CD4-positive, alpha-beta memory T cell (primary cell): ENCODE measurements at regions of chr3 and their contacts with region 1.

Region 1: GRCh38 chr3:127652231-127652995 is 20.3 kb upstream of the ABTB1 start:
- DNase-seq: peak in 3 of 5 donors; percentile 17 to 37 (median 22)
- H3K4me3 ChIP-seq: no peak overlapping the region
- H3K4me3 Mint-ChIP-seq: no peak overlapping the region
- H3K27ac ChIP-seq: no peak overlapping the region
- H3K27ac Mint-ChIP-seq: no peak overlapping the region
- H3K4me1 ChIP-seq: no peaks in the 10 kb centered on the region
- H3K4me1 Mint-ChIP-seq: no peaks in the 10 kb centered on the region
- H3K27me3 ChIP-seq: no peaks in the 10 kb centered on the region
- H3K27me3 Mint-ChIP-seq: no peaks in the 10 kb centered on the region

Region 2: GRCh38 chr3:126498929-126499328 is 1153.5 kb before region 1 on chr3:
- CTCF ChIA-PET with region 1: no interaction called
- POLR2A ChIA-PET with region 1: no interaction called
- intact Hi-C with region 1: no loop called
- DNase-seq: no peak
- H3K4me3 ChIP-seq: no peak overlapping the region
- H3K4me3 Mint-ChIP-seq: no peak overlapping the region
- H3K27ac ChIP-seq: no peak overlapping the region
- H3K27ac Mint-ChIP-seq: no peak overlapping the region
- H3K4me1 ChIP-seq: no peaks in the 10 kb centered on the region
- H3K4me1 Mint-ChIP-seq: peaks cover 0 to 2% (median 0%) of the 10 kb centered on the region in 4 donors
- H3K27me3 ChIP-seq: no peaks in the 10 kb centered on the region
- H3K27me3 Mint-ChIP-seq: no peaks in the 10 kb centered on the region

Region 3: DNA sequence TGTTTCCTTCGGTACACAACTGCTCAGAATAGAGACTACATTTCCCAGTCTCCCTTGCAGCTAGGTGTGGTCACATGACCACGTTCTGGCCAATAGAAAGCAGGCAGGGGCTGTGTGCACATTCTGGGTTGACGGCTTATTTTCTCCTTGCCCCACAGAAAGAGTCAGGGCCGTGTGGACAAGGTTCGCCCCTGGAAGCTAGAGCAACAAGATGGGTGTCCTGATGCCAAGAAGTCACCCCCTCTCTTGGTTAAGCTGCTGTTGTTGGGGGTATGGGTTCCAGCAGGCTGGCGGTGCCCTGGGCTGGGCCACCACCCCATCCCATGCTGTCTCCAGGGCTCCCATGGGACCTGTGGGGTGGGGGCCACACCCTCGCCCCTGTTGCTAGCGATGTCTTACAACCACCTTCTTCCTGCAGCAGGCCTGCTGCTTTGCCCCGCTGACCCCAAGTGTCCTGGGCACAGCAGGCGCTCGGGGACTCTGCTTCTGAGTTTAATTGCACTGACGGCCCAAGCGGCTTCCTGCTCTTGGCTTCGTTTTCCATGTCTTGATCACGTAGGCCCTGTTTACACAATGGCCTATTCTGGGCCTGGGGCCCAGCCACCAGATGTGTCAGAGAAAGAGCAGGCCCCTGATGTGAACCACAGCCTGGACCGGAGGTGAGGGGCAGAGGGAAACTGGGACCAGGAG is 45.3 kb after region 1 on chr3:
- CTCF ChIA-PET with region 1: interaction called, 35 read pairs
- POLR2A ChIA-PET with region 1: no interaction called
- intact Hi-C with region 1: loop called (anchors 1 kb)
- DNase-seq: peak; percentile 35 to 54 (median 50)
- H3K4me3 ChIP-seq: no peak overlapping the region
- H3K4me3 Mint-ChIP-seq: peak overlapping the region in 3 of 8 donors; percentile 17 to 68 (median 65)
- H3K27ac ChIP-seq: no peak overlapping the region
- H3K27ac Mint-ChIP-seq: peak overlapping the region in 2 of 7 donors; percentile 4 to 20
- H3K4me1 ChIP-seq: no peaks in the 10 kb centered on the region
- H3K4me1 Mint-ChIP-seq: peaks cover 0 to 4% (median 2%) of the 10 kb centered on the region in 4 donors
- H3K27me3 ChIP-seq: no peaks in the 10 kb centered on the region
- H3K27me3 Mint-ChIP-seq: peaks cover 1 to 2% of the 10 kb centered on the region in 2 donors

Region 4: GRCh38 chr3:127848131-127849129 is 196.0 kb after region 1 on chr3:
- CTCF ChIA-PET with region 1: no interaction called
- POLR2A ChIA-PET with region 1: no interaction called
- intact Hi-C with region 1: no loop called
- DNase-seq: no peak
- H3K4me3 ChIP-seq: no peak overlapping the region
- H3K4me3 Mint-ChIP-seq: no peak overlapping the region
- H3K27ac ChIP-seq: no peak overlapping the region
- H3K27ac Mint-ChIP-seq: no peak overlapping the region
- H3K4me1 ChIP-seq: no peaks in the 10 kb centered on the region
- H3K4me1 Mint-ChIP-seq: no peaks in the 10 kb centered on the region
- H3K27me3 ChIP-seq: peaks cover 6% of the 10 kb centered on the region
- H3K27me3 Mint-ChIP-seq: peaks cover 7 to 8% of the 10 kb centered on the region in 2 donors

Region 5: DNA sequence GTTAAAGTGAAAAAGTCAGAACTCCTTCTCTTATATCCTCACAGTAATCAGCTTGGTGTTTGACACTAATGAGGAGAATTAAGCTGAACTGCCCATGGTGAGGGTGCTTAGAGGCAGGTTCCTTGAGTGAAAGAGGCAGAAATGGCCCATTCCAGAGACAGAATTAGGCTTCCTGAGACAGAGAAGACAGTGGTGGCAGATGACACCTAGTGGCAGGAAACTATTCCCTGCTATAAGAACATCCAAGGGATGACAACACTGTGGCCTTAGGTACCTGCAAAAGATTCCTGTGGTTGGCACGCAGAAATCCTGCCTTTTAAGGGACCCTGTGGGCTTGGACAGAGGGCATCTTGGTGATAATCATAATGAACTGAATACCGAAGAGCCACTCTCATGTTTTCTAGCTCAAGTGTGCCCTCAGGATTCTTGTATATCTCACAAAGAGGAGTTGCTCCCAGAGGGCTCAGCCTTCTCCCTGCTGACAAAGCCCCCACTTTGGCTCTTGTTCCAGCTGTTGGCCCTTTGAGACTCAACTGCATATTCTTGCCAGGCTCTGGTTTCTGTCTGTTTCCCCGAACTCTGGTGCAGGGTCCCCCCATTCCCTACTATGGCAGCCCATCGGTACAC is 318.7 kb after region 1 on chr3:
- CTCF ChIA-PET with region 1: interaction called, 4 read pairs
- POLR2A ChIA-PET with region 1: no interaction called
- intact Hi-C with region 1: loop called (anchors 1 kb)
- DNase-seq: peak in 4 of 5 donors; percentile 5 to 18 (median 12)
- H3K4me3 ChIP-seq: no peak overlapping the region
- H3K4me3 Mint-ChIP-seq: no peak overlapping the region
- H3K27ac ChIP-seq: no peak overlapping the region
- H3K27ac Mint-ChIP-seq: no peak overlapping the region
- H3K4me1 ChIP-seq: no peaks in the 10 kb centered on the region
- H3K4me1 Mint-ChIP-seq: no peaks in the 10 kb centered on the region
- H3K27me3 ChIP-seq: no peaks in the 10 kb centered on the region
- H3K27me3 Mint-ChIP-seq: peaks cover 6 to 14% of the 10 kb centered on the region in 2 donors